ENCODE measurements at regions of chr9 and their contacts with region 1.

Region 1: GRCh38 chr9:135884328-135885035 is 22.9 kb downstream of the CAMSAP1 start:
- DNase-seq: no peak
- H3K4me3 ChIP-seq: no peak overlapping the region
- H3K27ac ChIP-seq: no peak overlapping the region
- H3K4me1 ChIP-seq: peaks cover 17 to 25% of the 10 kb centered on the region in 2 donors
- H3K27me3 ChIP-seq: no peaks in the 10 kb centered on the region
- CTCF ChIP-seq: no peak
- POLR2A ChIP-seq: no peak

Region 2: GRCh38 chr9:135804581-135805421 is 79.7 kb before region 1 on chr9:
- intact Hi-C with region 1: no loop called
- DNase-seq: no peak
- H3K4me3 ChIP-seq: no peak overlapping the region
- H3K27ac ChIP-seq: no peak overlapping the region
- H3K4me1 ChIP-seq: no peaks in the 10 kb centered on the region
- H3K27me3 ChIP-seq: no peaks in the 10 kb centered on the region
- CTCF ChIP-seq: no peak
- POLR2A ChIP-seq: no peak

Region 3: DNA sequence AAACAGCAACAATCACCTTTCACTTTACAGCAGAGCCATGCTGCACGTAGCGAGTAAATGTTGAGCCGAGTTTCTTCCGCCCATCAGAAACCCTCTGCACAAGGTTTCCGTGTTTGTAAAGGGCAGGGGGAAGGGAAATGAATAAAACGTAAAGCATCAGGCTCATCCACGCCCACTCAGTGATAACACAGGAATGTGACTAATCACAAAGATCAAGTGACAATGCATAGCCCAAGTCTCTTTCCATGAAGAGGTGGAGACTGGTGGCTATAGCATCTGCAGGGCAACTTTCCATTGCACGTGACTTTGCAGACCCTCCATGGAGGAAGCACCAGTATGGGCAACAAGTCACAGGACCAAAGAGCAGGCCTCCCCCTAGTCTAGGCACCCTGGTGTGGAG is 33.7 kb before region 1 on chr9:
- intact Hi-C with region 1: loop called (anchors 2 kb)
- DNase-seq: no peak
- H3K4me3 ChIP-seq: no peak overlapping the region
- H3K27ac ChIP-seq: no peak overlapping the region
- H3K4me1 ChIP-seq: no peaks in the 10 kb centered on the region
- H3K27me3 ChIP-seq: no peaks in the 10 kb centered on the region
- CTCF ChIP-seq: no peak
- POLR2A ChIP-seq: no peak